ENCODE measurements at regions of chr16 and their contacts with region 1.

Region 1: DNA sequence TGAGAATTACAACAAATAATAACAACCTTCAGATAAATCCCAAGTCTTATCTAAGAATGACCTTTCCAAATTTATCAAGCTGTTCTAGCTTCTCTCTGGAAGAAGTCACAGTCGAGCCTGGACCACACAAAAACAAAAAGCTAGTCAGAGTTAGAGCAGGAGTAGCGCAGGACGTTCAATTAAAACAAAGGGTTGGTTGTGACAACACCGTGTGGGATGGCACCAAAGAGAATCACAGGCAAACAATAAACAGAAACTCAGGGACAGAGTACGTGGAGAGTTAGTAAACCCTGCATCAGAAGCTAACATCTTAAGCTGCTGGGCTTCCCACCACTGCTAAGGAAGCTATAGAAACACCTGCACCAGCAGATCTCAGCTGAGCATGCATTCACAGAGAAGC is 23.8 kb downstream of the ARHGAP17 start:
- DNase-seq: peak; percentile 32
- H3K4me3 ChIP-seq: no peak overlapping the region
- H3K27ac ChIP-seq: no peak overlapping the region
- H3K4me1 ChIP-seq: peaks cover 52% of the 10 kb centered on the region
- CTCF ChIP-seq: no peak

Region 2: DNA sequence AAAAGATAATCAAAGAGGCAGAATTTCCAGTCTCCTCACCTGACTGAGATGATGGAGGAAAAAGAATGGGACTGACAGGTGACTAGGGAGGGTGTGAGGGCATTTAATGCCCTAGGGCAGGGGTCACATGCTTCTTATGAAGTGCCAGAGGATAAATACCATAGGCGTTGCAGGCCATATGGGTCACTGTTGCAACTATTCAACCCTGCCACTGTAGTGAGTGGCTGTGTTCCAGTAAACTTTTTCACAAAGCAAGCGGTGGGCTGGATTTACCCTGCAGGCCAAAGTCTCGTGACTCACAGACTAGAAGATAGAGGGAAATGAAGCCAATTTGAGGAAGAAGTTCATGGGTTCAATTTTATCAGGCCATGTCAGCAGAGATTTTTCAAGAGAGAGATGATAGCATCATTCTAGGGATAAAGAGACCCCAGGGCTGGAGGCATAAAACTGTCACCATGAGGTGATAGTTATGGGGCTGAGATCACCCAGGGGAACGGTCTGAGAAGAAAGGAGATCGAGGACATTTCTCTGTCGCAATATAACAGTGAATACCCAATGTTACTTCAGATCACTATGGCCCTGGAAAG is 15.2 kb after region 1 on chr16:
- CTCF ChIA-PET with region 1: no interaction called
- POLR2A ChIA-PET with region 1: interaction called, 6 read pairs
- intact Hi-C with region 1: loop called (anchors 2 kb)
- DNase-seq: no peak
- H3K4me3 ChIP-seq: no peak overlapping the region
- H3K27ac ChIP-seq: no peak overlapping the region
- H3K4me1 ChIP-seq: peaks cover 11% of the 10 kb centered on the region
- CTCF ChIP-seq: no peak